ENCODE measurements at regions of chr19 and their contacts with region 1.

Region 1: DNA sequence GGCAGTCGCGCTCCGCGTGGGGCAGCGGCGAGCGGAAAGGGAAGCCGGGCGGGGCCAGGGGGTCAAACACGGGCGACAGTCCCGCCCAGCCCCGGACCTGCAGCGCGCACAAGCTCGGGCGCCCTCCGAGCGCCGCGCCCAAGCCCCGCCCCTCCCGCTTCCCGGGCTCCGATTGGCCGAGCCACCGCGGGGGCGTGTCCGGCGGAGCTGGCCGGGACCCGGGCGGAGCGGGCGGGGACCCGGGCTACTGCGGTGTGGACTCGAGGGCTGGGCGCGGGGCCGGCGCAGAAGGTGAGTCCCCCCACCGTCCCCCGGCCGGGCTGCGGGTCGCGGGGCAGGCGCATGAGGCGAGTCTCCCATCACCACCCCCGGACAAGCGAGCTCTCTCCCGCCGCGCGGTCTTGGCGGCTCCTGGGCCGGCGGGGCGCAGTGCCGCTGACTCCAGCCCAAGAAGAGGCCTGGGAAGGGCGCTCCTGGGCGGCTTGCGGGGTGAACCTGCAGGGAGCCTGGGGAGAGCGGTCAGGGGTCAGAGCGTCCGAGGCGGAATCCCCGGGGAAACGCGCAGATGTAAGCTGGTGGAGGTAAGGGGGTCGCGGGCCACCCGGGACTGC is at the start of gene PLEKHF1:
- DNase-seq: peak; percentile 92
- ATAC-seq: peak; percentile 76
- H3K4me3 Mint-ChIP-seq: peak within 1 kb of the TSS; percentile 87
- H3K27ac Mint-ChIP-seq: peak within 1 kb of the TSS; percentile 96
- H3K4me1 Mint-ChIP-seq: peaks cover 71% of the 10 kb centered on the region
- H3K27me3 Mint-ChIP-seq: no peaks in the 10 kb centered on the region
- total RNA-seq, gene PLEKHF1: 25.4 to 26.6 TPM

Region 2: DNA sequence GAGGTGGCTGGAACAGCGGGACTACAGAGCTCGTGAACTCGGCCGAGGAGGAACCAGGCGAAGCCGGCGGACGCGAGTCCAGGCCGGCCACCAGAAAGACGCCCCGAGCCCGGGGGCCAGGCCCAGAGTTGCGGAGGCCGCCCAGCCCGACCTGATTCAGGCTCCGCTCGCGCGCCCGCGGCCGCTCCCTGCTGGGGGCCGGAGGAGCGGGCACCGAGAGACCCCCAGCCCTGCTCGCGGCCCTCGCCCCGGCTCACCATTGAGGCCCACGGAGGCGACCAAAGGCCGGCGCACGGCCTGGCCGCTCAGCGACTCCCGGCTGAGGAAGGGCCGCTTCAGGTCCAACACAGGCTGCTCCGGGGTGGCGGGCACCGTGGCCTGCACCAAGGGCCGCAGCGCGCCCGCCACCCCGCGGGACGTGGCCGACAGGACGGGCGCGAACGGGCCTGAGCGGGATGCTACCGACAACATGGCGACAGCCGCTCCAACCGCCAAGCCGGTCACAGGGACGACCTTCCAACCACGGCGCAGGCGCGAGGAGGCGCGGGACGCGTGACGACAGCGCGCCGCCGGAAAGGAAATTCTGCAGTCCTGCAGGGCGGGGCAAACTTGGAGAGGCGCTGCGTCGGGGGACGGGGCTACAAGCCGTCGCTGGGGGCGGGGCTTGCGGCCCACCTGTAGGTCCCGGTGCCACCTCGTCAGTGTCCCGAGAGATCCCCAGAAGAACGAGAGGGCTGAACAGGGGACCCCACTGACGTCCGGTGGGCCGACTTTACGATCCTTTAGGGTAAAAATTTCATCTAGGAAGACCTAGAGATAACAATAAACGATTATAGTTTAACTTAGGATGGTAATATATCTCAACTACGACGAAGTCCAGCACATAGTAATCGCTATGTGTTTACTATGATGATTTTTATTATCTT is 452.4 kb before region 1 on chr19 and contains the start of gene UQCRFS1:
- CTCF ChIA-PET with region 1: interaction called, 3 read pairs
- POLR2A ChIA-PET with region 1: no interaction called
- intact Hi-C with region 1: loop called in 1 of 2 experiments (anchors 5 kb)
- DNase-seq: peak; percentile 98
- ATAC-seq: peak; percentile 98
- H3K4me3 Mint-ChIP-seq: peak within 1 kb of the TSS; percentile 95
- H3K27ac Mint-ChIP-seq: peak within 1 kb of the TSS; percentile 95
- H3K4me1 Mint-ChIP-seq: peaks cover 48% of the 10 kb centered on the region
- H3K27me3 Mint-ChIP-seq: peaks cover 3% of the 10 kb centered on the region
- total RNA-seq, gene UQCRFS1: 39.1 to 45.3 TPM

Region 3: DNA sequence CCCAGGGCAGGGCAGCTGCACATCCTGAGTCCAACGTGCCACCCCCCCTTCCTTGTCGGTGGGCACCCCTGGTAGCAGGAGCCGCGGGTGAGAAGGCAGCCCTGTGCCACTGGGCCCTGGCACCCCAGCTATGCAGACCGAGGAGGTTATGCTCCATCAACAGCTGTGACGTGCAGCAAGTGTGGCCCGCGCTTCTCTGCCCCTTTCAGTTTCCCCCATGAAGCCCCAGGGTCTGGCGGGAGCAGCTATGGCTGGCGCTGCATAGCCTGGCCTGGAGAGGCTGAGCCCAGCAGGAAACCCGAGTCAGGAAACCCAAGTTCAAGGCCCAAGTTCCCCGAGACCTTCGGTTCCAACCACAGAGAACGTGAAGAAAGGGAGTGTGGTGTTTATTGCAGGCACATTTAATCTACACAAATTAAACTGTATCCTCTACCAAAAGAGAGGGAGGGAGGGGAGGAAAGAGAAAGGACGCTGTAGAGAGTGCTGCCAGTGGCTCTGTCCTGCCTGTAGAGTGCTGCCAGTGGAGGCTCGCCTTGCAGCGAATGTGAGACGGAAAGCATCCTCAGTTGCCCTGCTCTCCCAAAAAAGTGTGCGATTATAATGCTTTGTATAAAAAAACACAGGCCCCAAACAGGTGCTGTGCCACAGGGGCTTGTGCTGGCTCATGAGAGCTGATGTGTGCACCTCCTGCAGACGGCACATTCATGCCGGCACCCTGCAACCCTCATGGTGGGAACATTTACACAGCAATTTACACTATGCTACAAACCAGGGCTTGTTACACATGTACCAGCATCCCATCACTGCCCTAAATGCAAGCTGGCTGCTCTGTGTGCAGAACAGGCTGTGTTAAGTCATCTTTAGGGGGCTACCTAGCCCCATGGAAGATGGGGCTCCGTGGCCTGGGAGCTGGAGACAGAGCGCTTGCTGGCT is 42.9 kb before region 1 on chr19:
- CTCF ChIA-PET with region 1: interaction called, 6 read pairs
- POLR2A ChIA-PET with region 1: interaction called, 6 read pairs
- intact Hi-C with region 1: loop called in 1 of 2 experiments (anchors 1 kb)
- DNase-seq: peak; percentile 65
- ATAC-seq: peak; percentile 53
- H3K4me3 Mint-ChIP-seq: peak overlapping the region; percentile 20
- H3K27ac Mint-ChIP-seq: peak overlapping the region; percentile 63
- H3K4me1 Mint-ChIP-seq: peaks cover 51% of the 10 kb centered on the region
- H3K27me3 Mint-ChIP-seq: no peaks in the 10 kb centered on the region

Region 4: DNA sequence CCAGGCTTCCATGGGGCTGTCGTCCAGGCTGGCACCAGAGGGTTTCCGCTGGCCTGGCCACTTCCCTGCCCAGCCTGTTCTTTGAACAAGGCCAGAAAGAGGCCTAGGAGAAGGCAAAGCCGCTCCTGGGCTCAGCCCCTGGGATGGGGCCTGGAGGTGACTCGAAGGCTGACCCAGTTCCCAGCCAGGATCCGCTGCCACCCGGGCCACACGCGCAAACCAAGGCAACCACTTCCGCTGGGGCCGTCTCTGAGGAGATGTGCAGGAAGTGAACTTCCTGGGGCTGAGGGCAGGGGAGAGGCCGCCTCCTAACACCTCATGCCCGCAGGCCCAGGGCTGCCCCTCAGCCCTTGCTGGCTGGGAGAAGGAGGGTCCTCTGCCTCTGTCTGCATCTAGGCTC is 15.1 kb after region 1 on chr19:
- CTCF ChIA-PET with region 1: interaction called, 21 read pairs
- POLR2A ChIA-PET with region 1: no interaction called
- intact Hi-C with region 1: loop called (anchors 1 to 2 kb)
- DNase-seq: peak; percentile 92
- ATAC-seq: peak; percentile 91
- H3K4me3 Mint-ChIP-seq: peak overlapping the region; percentile 61
- H3K27ac Mint-ChIP-seq: peak overlapping the region; percentile 91
- H3K4me1 Mint-ChIP-seq: peaks cover 75% of the 10 kb centered on the region
- H3K27me3 Mint-ChIP-seq: no peaks in the 10 kb centered on the region

Region 5: GRCh38 chr19:29694669-29695627 is 29.6 kb after region 1 on chr19:
- CTCF ChIA-PET with region 1: interaction called, 17 read pairs
- POLR2A ChIA-PET with region 1: no interaction called
- intact Hi-C with region 1: loop called in 1 of 2 experiments (anchors 2 kb)
- DNase-seq: peak; percentile 92
- ATAC-seq: peak; percentile 97
- H3K4me3 Mint-ChIP-seq: no peak overlapping the region
- H3K27ac Mint-ChIP-seq: peak overlapping the region; percentile 53
- H3K4me1 Mint-ChIP-seq: peaks cover 12% of the 10 kb centered on the region
- H3K27me3 Mint-ChIP-seq: no peaks in the 10 kb centered on the region

Region 6: DNA sequence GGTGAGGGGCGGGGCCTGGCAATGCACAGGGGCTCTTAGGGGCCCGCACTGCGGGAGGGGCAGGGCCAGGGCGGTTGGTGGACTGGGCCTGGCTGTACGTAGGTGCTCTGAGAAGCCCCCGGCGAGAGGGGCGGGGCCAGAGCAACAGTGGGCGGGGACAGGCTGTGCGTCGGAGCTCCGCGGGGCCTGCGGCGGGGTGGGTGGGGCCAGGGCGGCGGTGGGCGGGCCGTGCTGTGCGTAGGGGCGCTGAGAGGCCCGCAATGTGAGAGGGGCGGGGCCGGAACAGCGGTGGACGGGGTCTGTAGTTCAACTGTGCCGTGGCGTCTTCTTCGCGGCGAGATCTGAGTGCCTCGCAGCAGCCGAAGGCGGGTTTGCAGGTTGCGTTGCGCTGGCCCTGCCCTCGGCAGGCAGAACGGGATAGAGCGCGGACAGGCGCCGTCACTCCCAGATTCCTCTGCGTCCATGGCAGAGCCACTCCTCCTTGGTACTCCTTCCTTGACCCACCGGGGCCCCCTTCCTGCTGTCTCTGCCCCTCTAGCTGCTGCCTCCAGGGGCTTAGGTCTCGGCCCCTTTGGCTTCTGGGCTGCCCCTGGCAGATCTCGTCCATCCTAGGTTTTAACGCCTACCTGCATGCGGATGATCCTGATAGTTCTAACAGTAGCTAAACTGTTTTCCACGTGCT is 179.7 kb after region 1 on chr19:
- CTCF ChIA-PET with region 1: interaction called, 3 read pairs
- POLR2A ChIA-PET with region 1: no interaction called
- intact Hi-C with region 1: loop called in 1 of 2 experiments (anchors 1 kb)
- DNase-seq: peak; percentile 99
- ATAC-seq: peak; percentile 83
- H3K4me3 Mint-ChIP-seq: peak overlapping the region; percentile 83
- H3K27ac Mint-ChIP-seq: peak overlapping the region; percentile 83
- H3K4me1 Mint-ChIP-seq: peaks cover 11% of the 10 kb centered on the region
- H3K27me3 Mint-ChIP-seq: no peaks in the 10 kb centered on the region

Region 7: DNA sequence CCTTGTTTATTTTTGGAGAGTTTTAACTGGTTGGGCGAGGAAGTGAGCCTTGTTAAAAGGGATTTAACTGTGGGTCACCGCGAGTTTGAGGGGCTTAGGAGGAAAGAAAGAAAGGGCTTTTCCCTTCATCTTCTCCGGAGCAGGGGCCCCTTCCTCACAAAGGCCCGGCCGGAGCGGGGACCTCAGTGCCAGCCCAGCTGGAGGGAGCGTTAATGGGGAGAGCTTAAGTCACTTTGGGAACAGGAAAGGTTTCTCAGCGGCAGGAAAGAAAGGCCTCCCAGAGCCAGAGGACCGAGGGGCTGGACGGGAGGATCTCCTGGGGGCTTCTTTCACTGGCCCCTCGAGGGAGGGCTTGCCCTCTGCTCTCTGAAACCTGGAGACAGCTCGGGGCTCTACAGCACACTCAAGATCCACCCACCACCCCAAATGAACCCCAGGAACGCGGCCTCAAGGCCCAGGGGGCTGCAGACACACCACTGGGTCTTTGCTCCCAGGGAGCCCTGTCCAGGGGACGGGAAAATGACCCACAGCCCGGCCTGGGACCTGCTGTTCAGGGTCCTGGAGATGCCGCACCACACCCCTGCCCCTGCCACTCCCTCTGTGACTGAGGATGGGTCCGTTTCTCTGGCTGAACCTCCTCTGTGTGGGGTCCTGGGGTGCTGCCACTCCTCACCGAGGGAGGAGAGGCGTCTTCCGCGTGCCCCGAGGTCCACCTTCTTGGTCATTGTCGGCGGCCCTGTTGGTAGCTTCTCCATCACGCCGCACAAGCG is 405.1 kb after region 1 on chr19:
- CTCF ChIA-PET with region 1: no interaction called
- POLR2A ChIA-PET with region 1: no interaction called
- intact Hi-C with region 1: no loop called
- DNase-seq: no peak
- ATAC-seq: no peak
- H3K4me3 Mint-ChIP-seq: no peak overlapping the region
- H3K27ac Mint-ChIP-seq: no peak overlapping the region
- H3K4me1 Mint-ChIP-seq: no peaks in the 10 kb centered on the region
- H3K27me3 Mint-ChIP-seq: no peaks in the 10 kb centered on the region

Region 8: DNA sequence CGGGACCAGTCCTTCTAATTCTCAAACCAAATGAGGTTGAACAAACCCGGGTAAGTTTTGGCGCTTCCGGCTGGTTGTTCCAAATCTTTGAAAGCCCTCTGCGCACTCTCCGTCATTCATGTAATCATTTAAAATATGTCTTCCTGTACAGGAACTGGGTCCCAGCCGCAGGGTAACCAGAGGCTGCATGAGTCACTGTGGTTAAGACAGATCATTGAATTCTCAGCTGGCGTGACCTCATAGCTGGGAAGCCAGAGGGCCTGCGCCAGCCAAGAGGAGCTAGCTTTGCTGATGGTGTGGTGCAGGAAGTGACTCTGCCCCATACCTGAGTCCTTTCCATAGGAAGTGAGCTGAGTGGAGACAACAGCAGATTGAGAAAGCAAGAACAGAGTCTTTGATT is 1548.8 kb after region 1 on chr19:
- CTCF ChIA-PET with region 1: no interaction called
- POLR2A ChIA-PET with region 1: no interaction called
- intact Hi-C with region 1: loop called in 1 of 2 experiments (anchors 10 kb)
- DNase-seq: peak; percentile 96
- ATAC-seq: peak; percentile 94
- H3K4me3 Mint-ChIP-seq: peak overlapping the region; percentile 61
- H3K27ac Mint-ChIP-seq: peak overlapping the region; percentile 99
- H3K4me1 Mint-ChIP-seq: peaks cover 36% of the 10 kb centered on the region
- H3K27me3 Mint-ChIP-seq: no peaks in the 10 kb centered on the region